Sigmoid colon (tissue), 7 donors: ENCODE measurements at regions of chr9 and their contacts with region 1.

Region 1: DNA sequence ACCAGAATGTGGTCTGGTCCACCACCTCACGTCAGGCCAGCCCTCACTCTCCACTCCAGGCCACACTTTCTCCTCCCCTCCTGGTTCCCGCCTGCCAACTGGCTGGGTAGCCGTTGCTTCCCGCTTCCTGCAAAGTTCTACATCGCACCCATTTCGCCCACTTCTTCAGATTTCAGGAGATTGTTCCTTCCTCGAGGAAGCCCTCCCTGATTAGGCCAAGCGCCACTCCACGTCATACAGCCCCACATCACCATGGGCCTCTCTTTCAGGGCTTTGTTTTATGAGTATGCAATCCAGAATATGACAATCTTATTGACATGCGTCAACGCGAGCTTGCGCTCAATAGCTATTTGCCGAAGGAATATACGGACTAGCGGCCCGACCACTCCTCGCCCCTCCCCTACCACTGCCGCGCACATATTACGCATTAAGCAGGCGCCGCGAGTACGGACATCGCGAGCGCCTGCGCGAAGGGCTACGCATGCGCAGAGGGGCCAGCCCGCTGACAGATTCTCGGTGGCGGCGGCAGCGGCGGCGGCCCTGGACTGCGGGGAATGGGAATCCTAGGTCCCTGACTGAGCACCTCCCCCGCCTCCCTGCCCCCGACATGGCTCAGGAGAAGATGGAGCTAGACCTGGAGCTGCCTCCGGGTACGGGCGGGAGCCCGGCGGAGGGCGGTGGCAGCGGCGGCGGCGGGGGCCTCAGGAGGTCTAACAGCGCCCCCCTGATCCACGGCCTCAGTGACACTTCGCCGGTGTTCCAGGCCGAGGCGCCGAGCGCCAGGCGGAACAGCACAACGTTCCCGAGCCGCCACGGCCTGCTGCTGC is 74.7 kb downstream of the PIP5K1B start:
- DNase-seq: peak; percentile 97
- H3K4me3 ChIP-seq: peak overlapping the region; percentile 77 to 82 (median 80)
- H3K27ac ChIP-seq: peak overlapping the region; percentile 91 to 95 (median 93)
- H3K4me1 ChIP-seq: peaks cover 0 to 50% (median 46%) of the 10 kb centered on the region in 4 donors
- H3K27me3 ChIP-seq: no peaks in the 10 kb centered on the region
- CTCF ChIP-seq: no peak
- EP300 ChIP-seq: no peak
- POLR2A ChIP-seq: peak; percentile 79 to 84

Region 2: DNA sequence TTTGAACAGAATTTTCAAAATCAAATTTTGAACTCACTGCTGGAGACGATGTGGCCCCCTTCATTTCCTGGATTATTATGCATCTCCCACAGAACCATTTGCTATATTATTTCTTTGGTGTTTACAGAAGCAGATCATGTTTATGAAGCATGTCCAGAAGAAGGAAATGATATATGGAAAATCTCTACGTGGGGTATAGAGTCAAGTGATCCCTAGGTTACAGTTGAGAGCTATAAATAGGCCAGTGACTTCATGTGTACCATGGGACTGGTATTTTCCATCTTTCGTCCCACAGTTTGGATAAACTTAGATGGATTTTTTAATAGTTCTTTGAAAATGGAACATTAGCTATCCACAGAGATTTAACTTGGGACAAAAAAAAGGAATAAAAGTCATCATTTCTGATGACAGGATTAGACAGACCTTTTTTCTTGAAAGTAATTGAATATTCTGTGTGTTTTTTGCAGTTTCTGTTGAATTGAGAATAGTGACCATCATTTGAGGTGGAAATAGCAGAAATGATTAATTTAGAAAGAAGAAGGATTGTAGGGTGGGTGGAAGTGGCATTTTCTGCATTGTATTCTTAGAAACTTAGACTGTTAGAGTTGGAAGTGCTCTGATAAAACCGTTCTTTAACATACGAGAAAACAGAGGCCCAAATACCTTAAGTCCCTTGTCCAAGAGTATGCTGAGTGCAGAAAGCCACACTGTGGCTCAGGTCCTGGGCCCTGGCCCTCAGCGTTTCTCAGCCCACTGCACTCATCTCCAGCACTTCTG is 61.7 kb after region 1 on chr9:
- intact Hi-C with region 1: no loop called
- DNase-seq: no peak
- H3K4me3 ChIP-seq: no peak overlapping the region
- H3K27ac ChIP-seq: peak overlapping the region in 1 of 4 donors; percentile 6
- H3K4me1 ChIP-seq: peaks cover 0 to 24% (median 17%) of the 10 kb centered on the region in 4 donors
- H3K27me3 ChIP-seq: no peaks in the 10 kb centered on the region
- CTCF ChIP-seq: no peak
- EP300 ChIP-seq: no peak
- POLR2A ChIP-seq: no peak

Region 3: DNA sequence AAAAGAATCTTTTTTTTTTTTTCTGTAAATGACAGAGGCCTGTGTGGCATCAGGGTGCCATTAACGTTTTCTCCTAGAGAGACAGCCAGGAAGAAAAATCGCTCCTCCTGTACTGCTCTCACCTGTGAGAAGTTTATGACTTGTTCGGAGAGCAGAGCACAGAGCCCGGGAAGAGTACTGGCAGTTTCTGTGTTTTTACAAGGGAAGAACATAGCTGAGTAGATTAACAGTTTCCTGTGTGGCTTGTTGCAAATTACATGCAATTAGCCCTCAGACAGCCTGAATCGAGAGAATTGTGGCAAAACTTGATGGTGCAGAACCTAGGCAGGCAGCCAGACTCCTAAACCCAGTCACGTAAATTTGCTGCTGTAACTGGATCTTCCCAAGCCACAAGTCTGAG is 202.0 kb after region 1 on chr9:
- intact Hi-C with region 1: loop called (anchors 5 kb)
- DNase-seq: no peak
- H3K4me3 ChIP-seq: no peak overlapping the region
- H3K27ac ChIP-seq: peak overlapping the region in 3 of 4 donors; percentile 80 to 88 (median 86)
- H3K4me1 ChIP-seq: peaks cover 0 to 53% (median 42%) of the 10 kb centered on the region in 4 donors
- H3K27me3 ChIP-seq: no peaks in the 10 kb centered on the region
- CTCF ChIP-seq: no peak
- EP300 ChIP-seq: no peak
- POLR2A ChIP-seq: no peak

Region 4: DNA sequence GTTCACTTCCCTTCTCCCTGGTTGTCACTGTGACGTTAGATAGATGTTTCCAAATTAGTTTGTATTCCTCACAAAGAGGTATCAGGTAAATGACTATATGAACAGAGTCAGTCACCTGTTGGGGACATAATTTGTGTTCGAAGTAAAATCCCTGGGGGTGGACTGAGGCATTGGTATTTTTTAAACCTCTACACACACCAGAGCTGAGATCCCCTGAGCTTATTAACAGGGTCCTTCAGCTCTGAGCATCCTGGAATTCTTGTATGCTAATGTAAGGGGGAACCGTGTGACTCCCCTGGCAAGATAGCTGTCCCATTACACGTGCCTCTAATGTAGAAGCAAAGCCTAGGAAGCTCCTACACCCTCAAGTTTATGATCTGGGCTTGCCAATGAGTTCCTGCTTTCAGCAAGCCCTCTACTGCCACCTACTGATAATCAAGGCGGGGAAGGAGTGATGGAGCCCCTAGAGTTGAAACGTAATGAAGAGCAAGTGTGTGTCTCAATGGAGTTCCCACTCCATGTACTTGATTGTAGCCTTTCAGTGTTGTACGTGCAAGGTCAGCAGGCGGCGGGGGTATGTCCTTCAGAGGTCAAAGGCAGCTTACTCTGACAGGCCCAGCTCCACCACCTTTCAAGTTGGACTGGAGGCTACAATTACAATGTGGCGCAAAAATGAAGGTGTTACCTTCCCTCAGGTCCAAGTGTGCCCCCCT is 219.8 kb after region 1 on chr9:
- intact Hi-C with region 1: loop called (anchors 2 kb)
- DNase-seq: peak; percentile 81
- H3K4me3 ChIP-seq: no peak overlapping the region
- H3K27ac ChIP-seq: peak overlapping the region in 1 of 4 donors; percentile 27
- H3K4me1 ChIP-seq: peaks cover 0 to 27% (median 14%) of the 10 kb centered on the region in 4 donors
- H3K27me3 ChIP-seq: no peaks in the 10 kb centered on the region
- CTCF ChIP-seq: peak; percentile 66 to 85 (median 75)
- EP300 ChIP-seq: no peak
- POLR2A ChIP-seq: no peak